Stomach (tissue), 19 donors: ENCODE measurements at regions of chr6 and their contacts with region 1.

Region 1: GRCh38 chr6:35452186-35453090 is at the start of gene FANCE:
- DNase-seq: peak; percentile 97 to 98
- H3K4me3 ChIP-seq: peak within 1 kb of the TSS; percentile 58 to 78 (median 71)
- H3K27ac ChIP-seq: peak within 1 kb of the TSS; percentile 61 to 88 (median 80)
- H3K4me1 ChIP-seq: peaks cover 15 to 32% (median 25%) of the 10 kb centered on the region in 4 donors
- H3K27me3 ChIP-seq: no peaks in the 10 kb centered on the region
- CTCF ChIP-seq: no peak
- EP300 ChIP-seq: no peak
- POLR2A ChIP-seq: no peak
- total RNA-seq, gene FANCE: 1.3 to 8.3 (median 3.5) TPM

Region 2: DNA sequence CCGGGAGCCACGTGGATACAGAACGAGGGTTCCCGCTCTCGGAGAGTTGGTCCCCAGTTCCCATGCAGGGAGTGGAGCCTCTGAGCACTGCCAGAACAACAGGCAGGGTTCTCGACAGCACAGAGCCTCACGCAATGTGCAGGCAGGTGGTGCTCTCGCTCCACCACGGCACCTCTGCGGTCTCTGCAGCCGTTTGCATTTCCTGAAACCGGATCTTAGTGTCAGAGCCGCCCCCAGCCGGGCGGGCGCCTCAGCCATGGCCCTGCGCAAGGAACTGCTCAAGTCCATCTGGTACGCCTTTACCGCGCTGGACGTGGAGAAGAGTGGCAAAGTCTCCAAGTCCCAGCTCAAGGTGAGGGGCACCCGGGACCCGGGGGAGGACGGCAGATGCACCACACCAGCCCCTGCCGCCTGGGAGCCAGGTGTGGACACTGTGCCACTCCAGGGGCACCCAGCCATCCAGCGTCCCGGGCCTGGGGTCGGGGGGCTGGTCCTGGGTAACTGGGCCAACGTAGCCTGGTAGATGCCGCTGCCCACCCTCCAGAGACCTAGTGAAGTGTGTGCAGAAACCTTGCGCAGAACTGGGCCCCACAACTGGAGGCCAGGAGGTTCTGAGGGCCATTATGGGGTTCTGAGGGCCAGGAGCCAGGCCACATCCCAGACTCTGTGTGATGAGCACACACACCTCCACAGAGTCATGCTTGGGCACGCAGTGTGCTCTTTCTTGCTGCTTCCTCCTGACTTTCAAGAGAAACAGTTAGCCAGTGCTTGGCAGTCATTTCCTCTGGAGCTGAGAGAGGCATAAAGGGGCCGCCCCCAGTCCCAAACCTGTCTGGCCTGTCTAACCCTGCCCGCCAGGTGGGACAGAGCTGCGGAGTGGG is 154.6 kb before region 1 on chr6 and contains the start of gene DEF6:
- intact Hi-C with region 1: loop called (anchors 5 kb)
- DNase-seq: peak; percentile 92 to 96
- H3K4me3 ChIP-seq: peak within 1 kb of the TSS; percentile 47 to 56 (median 52)
- H3K27ac ChIP-seq: peak within 1 kb of the TSS; percentile 81 to 90 (median 82)
- H3K4me1 ChIP-seq: peaks cover 12 to 60% (median 38%) of the 10 kb centered on the region in 4 donors
- H3K27me3 ChIP-seq: no peaks in the 10 kb centered on the region
- CTCF ChIP-seq: peak in 5 of 7 experiments; percentile 54 to 96 (median 76)
- EP300 ChIP-seq: no peak
- POLR2A ChIP-seq: no peak
- total RNA-seq, gene DEF6: 4.9 to 35.3 (median 14.9) TPM

Region 3: GRCh38 chr6:35318196-35319171 is 134.0 kb before region 1 on chr6:
- intact Hi-C with region 1: no loop called
- DNase-seq: peak; percentile 87 to 95
- H3K4me3 ChIP-seq: peak overlapping the region; percentile 53 to 61 (median 56)
- H3K27ac ChIP-seq: peak overlapping the region; percentile 56 to 78 (median 74)
- H3K4me1 ChIP-seq: peaks cover 0 to 25% (median 19%) of the 10 kb centered on the region in 4 donors
- H3K27me3 ChIP-seq: no peaks in the 10 kb centered on the region
- CTCF ChIP-seq: no peak
- EP300 ChIP-seq: no peak
- POLR2A ChIP-seq: no peak

Region 4: DNA sequence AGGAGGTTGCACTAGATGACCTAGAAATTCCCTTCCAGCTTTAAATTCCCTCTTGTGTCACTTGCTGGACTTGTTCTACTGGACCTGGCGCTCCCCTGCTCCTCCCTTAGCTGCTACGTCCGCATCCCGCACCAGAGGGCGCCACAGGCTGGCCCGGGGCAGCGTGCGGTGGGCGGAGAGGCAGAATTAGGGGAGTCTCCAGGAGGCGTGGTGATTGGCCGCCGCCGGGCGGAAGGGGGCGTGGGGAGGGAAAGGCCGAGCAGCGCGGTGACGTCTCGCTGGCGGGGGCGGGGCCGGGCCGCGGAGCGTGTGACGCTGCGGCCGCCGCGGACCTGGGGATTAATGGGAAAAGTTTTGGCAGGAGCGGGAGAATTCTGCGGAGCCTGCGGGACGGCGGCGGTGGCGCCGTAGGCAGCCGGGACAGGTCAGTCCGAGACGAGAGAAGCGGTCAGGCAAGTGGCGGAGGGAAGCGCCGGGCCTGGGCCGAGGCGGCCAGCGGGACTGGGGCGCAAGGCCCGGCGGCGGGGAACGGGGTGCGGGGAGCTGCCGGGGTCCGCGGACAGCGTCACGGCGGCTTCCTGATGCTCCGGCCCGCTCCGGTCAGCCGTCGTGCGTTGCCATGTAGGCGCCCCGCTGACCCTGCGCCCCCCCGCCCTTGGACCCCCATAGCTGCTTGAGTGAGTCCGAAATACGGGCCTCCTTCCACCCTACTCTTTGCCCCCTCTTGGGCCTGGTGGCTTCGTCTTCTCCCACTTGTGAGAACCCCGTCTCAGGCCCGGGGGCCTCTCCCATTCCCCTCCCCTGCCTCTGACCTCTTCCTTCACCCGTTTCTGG is 110.0 kb before region 1 on chr6 and contains the start of gene PPARD:
- intact Hi-C with region 1: loop called (anchors 5 kb)
- DNase-seq: peak; percentile 99
- H3K4me3 ChIP-seq: peak within 1 kb of the TSS; percentile 71 to 91 (median 81)
- H3K27ac ChIP-seq: peak within 1 kb of the TSS; percentile 91 to 98 (median 93)
- H3K4me1 ChIP-seq: peaks cover 8 to 47% (median 34%) of the 10 kb centered on the region in 4 donors
- H3K27me3 ChIP-seq: no peaks in the 10 kb centered on the region
- CTCF ChIP-seq: peak in 6 of 7 experiments; percentile 37 to 100 (median 96)
- EP300 ChIP-seq: no peak
- POLR2A ChIP-seq: no peak
- total RNA-seq, gene PPARD: 2.6 to 34.6 (median 10.5) TPM

Region 5: DNA sequence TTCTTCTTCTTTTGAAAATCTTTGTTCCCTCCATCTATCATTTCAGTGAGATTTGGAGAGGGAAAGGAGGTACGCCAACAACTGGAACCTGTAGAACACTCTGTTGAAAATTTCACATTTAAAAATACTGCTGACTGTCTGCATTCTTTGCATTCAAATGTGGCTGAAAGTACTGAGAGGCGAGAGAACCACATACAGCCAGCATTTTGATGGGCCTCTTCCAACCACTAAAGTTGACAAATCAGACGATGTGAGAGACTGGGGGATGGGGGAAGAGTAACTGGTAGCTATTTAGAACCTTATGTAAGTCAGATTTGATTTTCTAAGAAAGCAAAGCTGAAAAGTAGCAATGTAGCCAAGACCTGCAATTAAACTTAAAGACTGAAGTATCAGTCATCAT is 158.8 kb after region 1 on chr6:
- intact Hi-C with region 1: no loop called
- DNase-seq: peak in 1 of 2 donors; percentile 31
- H3K4me3 ChIP-seq: no peak overlapping the region
- H3K27ac ChIP-seq: peak overlapping the region in 3 of 5 donors; percentile 22 to 53 (median 35)
- H3K4me1 ChIP-seq: peaks cover 0 to 56% (median 12%) of the 10 kb centered on the region in 4 donors
- H3K27me3 ChIP-seq: no peaks in the 10 kb centered on the region
- CTCF ChIP-seq: no peak
- EP300 ChIP-seq: no peak
- POLR2A ChIP-seq: no peak